CD4-positive, alpha-beta T cell (primary cell): ENCODE measurements at regions of chr1 and their contacts with region 1.

Region 1: DNA sequence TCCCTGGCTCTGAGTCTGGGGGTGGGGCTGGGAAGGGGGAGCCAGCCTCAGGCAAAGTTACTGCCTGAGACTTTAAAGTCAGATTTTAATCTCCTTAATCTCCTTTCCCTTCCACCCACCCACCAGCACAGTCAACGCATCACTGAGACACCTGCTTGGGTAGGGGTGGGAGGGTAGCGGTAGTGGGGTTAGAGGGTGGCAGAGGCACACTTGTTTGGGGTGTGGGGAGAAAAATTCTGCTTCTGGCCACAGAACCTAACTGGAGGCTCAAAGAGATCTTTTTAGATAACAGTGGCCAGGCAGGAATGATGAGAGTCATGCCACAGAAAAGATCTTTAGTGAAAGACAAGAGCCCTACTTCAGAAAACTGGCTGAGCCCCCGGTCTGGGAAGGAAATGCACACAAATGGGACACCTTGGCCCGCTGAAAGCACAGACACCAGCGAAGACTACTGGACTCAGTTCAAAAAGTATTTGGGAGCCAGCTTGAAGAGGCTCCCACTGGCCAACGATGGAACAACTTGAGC is 44.1 kb downstream of the CD247 start:
- DNase-seq: peak in 8 of 14 experiments; percentile 40 to 80 (median 58)
- ATAC-seq: peak; percentile 84
- H3K4me3 ChIP-seq: peak overlapping the region; percentile 36
- H3K4me3 Mint-ChIP-seq: peak overlapping the region; percentile 78
- H3K27ac ChIP-seq: peak overlapping the region; percentile 67
- H3K27ac Mint-ChIP-seq: peak overlapping the region; percentile 100
- H3K4me1 ChIP-seq: peaks cover 74% of the 10 kb centered on the region
- H3K4me1 Mint-ChIP-seq: peaks cover 100% of the 10 kb centered on the region
- H3K27me3 ChIP-seq: no peaks in the 10 kb centered on the region
- H3K27me3 Mint-ChIP-seq: no peaks in the 10 kb centered on the region
- CTCF ChIP-seq: no peak

Region 2: GRCh38 chr1:167412920-167413319 is 61.3 kb before region 1 on chr1:
- CTCF ChIA-PET with region 1: no interaction called
- POLR2A ChIA-PET with region 1: no interaction called
- intact Hi-C with region 1: no loop called
- DNase-seq: no peak
- ATAC-seq: no peak
- H3K4me3 ChIP-seq: no peak overlapping the region
- H3K4me3 Mint-ChIP-seq: no peak overlapping the region
- H3K27ac ChIP-seq: no peak overlapping the region
- H3K27ac Mint-ChIP-seq: no peak overlapping the region
- H3K4me1 ChIP-seq: no peaks in the 10 kb centered on the region
- H3K4me1 Mint-ChIP-seq: peaks cover 8% of the 10 kb centered on the region
- H3K27me3 ChIP-seq: no peaks in the 10 kb centered on the region
- H3K27me3 Mint-ChIP-seq: no peaks in the 10 kb centered on the region
- CTCF ChIP-seq: no peak

Region 3: DNA sequence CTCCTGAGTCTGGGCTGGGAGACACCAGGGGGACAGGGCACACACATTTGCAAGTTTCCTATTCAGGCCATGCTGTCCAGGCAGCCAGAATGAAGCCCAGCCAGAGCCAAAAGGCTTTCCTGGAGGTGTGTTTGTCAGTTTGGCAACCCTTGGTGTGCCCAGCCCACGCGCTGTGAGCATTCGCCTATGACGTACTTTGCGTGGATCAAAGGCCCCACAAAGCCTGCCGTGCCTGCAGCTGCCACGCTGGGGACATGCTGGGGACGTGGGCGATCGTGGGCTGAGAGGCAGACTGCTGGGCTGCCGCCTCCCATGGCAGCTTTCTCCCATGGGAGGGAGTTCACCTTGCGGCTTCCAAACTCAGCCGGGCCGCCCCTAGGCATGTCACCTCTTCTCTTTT is 13.4 kb before region 1 on chr1:
- CTCF ChIA-PET with region 1: interaction called, 3 read pairs
- POLR2A ChIA-PET with region 1: interaction called, 117 read pairs
- intact Hi-C with region 1: loop called in 1 of 2 experiments (anchors 2 kb)
- DNase-seq: peak in 12 of 14 experiments; percentile 30 to 90 (median 58)
- ATAC-seq: peak; percentile 82
- H3K4me3 ChIP-seq: no peak overlapping the region
- H3K4me3 Mint-ChIP-seq: peak overlapping the region; percentile 65
- H3K27ac ChIP-seq: peak overlapping the region; percentile 68 to 69
- H3K27ac Mint-ChIP-seq: peak overlapping the region; percentile 100
- H3K4me1 ChIP-seq: peaks cover 91% of the 10 kb centered on the region
- H3K4me1 Mint-ChIP-seq: peaks cover 90% of the 10 kb centered on the region
- H3K27me3 ChIP-seq: no peaks in the 10 kb centered on the region
- H3K27me3 Mint-ChIP-seq: no peaks in the 10 kb centered on the region
- CTCF ChIP-seq: no peak

Region 4: GRCh38 chr1:167491586-167492461 is 17.6 kb after region 1 on chr1:
- CTCF ChIA-PET with region 1: interaction called, 6 read pairs
- POLR2A ChIA-PET with region 1: interaction called, 20 read pairs
- intact Hi-C with region 1: loop called in 1 of 2 experiments (anchors 2 kb)
- DNase-seq: peak in 3 of 14 experiments; percentile 61 to 72 (median 71)
- ATAC-seq: peak; percentile 35
- H3K4me3 ChIP-seq: peak overlapping the region; percentile 32
- H3K4me3 Mint-ChIP-seq: peak overlapping the region; percentile 74
- H3K27ac ChIP-seq: peak overlapping the region; percentile 76 to 89
- H3K27ac Mint-ChIP-seq: peak overlapping the region; percentile 100
- H3K4me1 ChIP-seq: peaks cover 98% of the 10 kb centered on the region
- H3K4me1 Mint-ChIP-seq: peaks cover 99% of the 10 kb centered on the region
- H3K27me3 ChIP-seq: no peaks in the 10 kb centered on the region
- H3K27me3 Mint-ChIP-seq: no peaks in the 10 kb centered on the region
- CTCF ChIP-seq: no peak